ENCODE measurements at regions of chr5 and their contacts with region 1.

Region 1: DNA sequence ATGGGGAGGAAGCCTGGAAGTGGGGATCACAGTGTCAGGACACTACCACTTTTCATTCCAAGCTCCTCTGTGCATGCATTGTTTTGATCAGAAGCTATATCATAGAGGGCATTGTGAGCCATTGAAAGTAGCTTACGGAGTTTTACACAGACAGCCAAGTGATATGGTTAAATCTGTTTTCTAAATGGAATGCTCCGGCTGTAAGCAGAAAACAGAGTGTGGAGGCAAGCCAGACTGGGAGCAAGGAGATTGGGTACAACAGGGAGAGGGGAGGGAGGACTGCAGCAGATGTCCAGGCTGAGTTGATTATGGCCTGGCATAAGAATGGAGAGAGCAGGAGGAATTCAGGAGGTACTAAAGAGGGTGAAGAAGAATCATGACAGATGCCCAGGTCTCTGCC is 15.5 kb upstream of the SOWAHA start:
- DNase-seq: no peak
- H3K4me3 ChIP-seq: no peak overlapping the region
- H3K27ac ChIP-seq: no peak overlapping the region
- H3K4me1 ChIP-seq: no peaks in the 10 kb centered on the region
- CTCF ChIP-seq: no peak

Region 2: DNA sequence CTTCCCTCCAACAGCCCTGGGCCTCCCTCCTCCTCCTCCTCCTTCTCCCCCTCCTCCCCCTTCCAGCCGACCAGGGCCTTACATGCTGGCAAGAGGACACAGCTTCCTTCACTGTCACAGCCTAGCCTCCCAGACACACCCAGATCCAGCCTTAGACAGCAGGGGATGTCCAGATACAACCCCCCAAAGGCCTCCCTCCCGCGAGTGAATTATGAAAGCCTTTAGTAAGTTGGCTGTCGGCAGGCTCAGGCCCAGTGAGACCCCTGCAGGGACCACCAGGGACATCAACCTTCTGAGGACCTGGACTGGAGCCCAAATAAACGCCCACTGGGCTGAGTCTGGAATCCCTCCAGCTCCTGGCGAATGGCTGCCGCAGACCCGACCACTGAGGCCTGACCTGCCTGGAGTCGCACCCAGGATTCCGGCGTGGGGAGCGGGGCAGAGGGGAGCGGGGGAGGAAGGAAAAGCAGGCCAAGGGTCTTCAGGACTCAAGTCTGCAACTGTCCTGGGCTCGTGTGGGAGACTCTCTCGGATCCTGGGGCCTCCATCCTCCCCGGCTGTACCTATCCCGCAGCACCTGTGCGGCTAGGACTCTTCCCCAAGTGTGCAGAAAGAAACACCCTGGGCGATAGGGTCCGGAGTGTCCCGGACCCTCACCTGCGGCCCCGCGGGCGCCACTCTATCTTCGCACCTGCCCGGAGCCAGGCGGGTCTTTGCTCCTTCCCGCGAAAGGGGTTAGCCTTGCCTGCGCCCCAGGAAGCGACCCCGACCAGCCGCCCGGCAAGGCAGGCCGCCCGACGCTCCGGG is 21.3 kb before region 1 on chr5:
- CTCF ChIA-PET with region 1: no interaction called
- POLR2A ChIA-PET with region 1: no interaction called
- intact Hi-C with region 1: loop called (anchors 1 kb)
- DNase-seq: no peak
- H3K4me3 ChIP-seq: peak overlapping the region; percentile 70
- H3K27ac ChIP-seq: no peak overlapping the region
- H3K4me1 ChIP-seq: peaks cover 7% of the 10 kb centered on the region
- CTCF ChIP-seq: no peak

Measured in OCI-LY7 (cell line).